HAP-1 (cell line): ENCODE measurements at regions of chr17 and their contacts with region 1.

Region 1: GRCh38 chr17:27747462-27748359 is 52.6 kb downstream of the NOS2 start:
- DNase-seq: peak in 1 of 2 experiments; percentile 20
- H3K4me3 ChIP-seq: no peak overlapping the region
- H3K4me1 ChIP-seq: no peaks in the 10 kb centered on the region
- H3K27me3 ChIP-seq: no peaks in the 10 kb centered on the region

Region 2: DNA sequence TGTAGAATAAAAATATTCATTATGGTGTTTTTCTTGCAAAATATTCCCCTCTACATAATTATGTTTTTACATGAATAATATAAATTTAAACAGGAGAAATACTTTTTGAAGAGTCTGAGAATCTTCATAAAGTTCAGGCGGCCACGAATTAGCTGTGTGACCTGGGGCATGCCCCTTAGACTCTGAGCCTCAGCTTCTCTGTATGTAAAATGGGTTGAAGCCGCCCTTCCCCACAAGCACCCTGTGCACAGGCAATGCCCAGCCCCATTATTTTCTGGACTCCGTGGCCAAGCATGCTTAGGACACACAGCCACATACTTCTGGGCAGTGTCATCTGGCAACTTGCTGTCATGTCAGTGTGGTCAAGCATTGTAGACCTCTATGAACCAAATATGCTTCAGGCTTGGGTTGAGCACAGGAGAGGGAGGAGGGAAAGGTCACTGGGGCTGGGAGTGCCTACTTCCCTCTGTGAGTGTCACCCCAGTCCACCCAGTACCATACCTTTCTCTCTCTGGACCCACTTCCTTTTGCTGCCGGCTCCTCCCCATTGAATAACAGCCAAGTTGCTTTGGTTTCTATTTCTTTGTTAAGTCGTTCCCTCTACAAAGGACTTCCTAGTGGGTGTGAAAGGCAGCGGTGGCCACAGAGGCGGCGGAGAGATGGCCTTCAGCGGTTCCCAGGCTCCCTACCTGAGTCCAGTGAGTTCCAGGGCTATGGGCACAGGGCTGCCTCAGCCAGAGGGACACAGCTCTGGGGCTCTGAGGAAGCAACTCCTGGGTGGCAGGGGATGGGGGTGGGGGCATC is 116.9 kb before region 1 on chr17 and contains the start of gene LGALS9:
- in situ Hi-C with region 1: loop called (anchors 10 kb)
- DNase-seq: no peak
- H3K4me3 ChIP-seq: no peak within 1 kb of the TSS
- H3K4me1 ChIP-seq: no peaks in the 10 kb centered on the region
- H3K27me3 ChIP-seq: no peaks in the 10 kb centered on the region

Region 3: DNA sequence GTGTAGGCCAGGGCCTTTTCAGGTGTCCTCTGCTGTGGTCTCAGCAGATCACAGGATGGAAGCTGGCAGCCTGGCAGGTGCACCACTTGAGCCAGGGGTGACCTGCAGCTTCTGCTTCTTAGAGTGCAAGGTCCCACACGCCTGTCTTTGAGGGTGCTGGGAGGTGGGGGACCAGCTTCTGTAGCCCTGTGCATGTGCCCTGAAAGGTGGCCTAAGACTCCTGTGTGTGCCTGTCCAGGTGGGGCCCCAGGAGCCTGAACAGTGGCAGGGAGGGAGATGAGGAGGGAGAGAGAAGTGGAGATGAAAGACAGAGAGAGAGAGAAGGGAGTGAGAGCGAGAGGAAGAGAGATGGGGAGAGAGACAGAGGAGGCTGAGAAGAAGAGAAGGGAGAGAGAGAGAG is 70.5 kb before region 1 on chr17:
- in situ Hi-C with region 1: loop called (anchors 10 kb)
- DNase-seq: no peak
- H3K4me3 ChIP-seq: no peak overlapping the region
- H3K4me1 ChIP-seq: no peaks in the 10 kb centered on the region
- H3K27me3 ChIP-seq: no peaks in the 10 kb centered on the region

Region 4: GRCh38 chr17:27805520-27806146 is 57.9 kb after region 1 on chr17:
- in situ Hi-C with region 1: loop called (anchors 10 kb)
- DNase-seq: peak; percentile 70 to 89
- H3K4me3 ChIP-seq: 0 out of 2 replicates have a peak overlapping the region, but pooled peaks have one; percentile 5
- H3K4me1 ChIP-seq: peaks cover 2% of the 10 kb centered on the region; the same call in 1 of the 2 replicates
- H3K27me3 ChIP-seq: no peaks in the 10 kb centered on the region